Pancreas (tissue), 10 donors: ENCODE measurements at regions of chr11 and their contacts with region 1.

Region 1: DNA sequence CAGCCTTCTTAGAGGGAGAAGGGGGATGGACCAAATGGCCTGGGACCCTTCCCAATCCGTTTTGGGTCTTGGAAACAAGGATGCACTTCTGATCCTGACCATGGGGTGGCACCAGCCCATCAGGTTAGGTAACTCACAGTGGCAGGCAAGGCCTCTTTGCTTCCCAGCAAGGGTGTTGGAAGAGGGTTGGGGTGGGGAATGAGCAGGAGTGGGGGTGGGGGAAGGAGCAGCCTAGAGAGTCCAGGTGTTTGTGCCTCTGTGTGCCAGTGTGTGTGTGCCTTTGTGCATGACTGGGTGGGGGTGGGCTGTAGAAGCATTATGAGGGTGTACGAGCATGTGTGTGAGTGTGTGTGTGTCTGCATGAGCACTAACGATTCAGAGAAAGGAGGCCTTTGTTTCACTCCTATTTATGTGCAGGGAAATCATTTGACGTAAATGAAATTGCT is 213.1 kb downstream of the INSC start:
- DNase-seq: peak; percentile 27 to 69 (median 52)
- ATAC-seq: peak; percentile 63 to 92 (median 88)
- H3K4me3 ChIP-seq: no peak overlapping the region
- H3K27ac ChIP-seq: no peak overlapping the region
- H3K4me1 ChIP-seq: no peaks in the 10 kb centered on the region
- H3K27me3 ChIP-seq: no peaks in the 10 kb centered on the region
- CTCF ChIP-seq: peak in 3 of 4 donors; percentile 33 to 47 (median 44)

Region 2: GRCh38 chr11:16613512-16614381 is 1285.9 kb after region 1 on chr11:
- intact Hi-C with region 1: loop called in 2 of 3 experiments (anchors 10 kb)
- DNase-seq: peak; percentile 78 to 95 (median 88)
- ATAC-seq: peak; percentile 98 to 99 (median 99)
- H3K4me3 ChIP-seq: peak overlapping the region; percentile 24 to 54 (median 30)
- H3K27ac ChIP-seq: peak overlapping the region in 3 of 4 donors; percentile 53 to 66 (median 62)
- H3K4me1 ChIP-seq: peaks cover 0 to 3% (median 0%) of the 10 kb centered on the region in 3 donors
- H3K27me3 ChIP-seq: peaks cover 0 to 3% (median 0%) of the 10 kb centered on the region in 4 donors
- CTCF ChIP-seq: peak; percentile 67 to 88 (median 76)